ENCODE measurements at regions of chr15 and their contacts with region 1.

Region 1: GRCh38 chr15:81400640-81401236 is 26.7 kb upstream of the TMC3 start:
- DNase-seq: peak; percentile 70
- H3K27ac ChIP-seq: no peak overlapping the region
- CTCF ChIP-seq: peak; percentile 95

Region 2: GRCh38 chr15:81274931-81275707 is 125.6 kb before region 1 on chr15:
- CTCF ChIA-PET with region 1: interaction called, 35 read pairs
- POLR2A ChIA-PET with region 1: no interaction called
- DNase-seq: peak; percentile 75
- H3K27ac ChIP-seq: no peak overlapping the region
- CTCF ChIP-seq: peak; percentile 84